K562 (cell line): ENCODE measurements at regions of chr5 and their contacts with region 1.

Region 1: GRCh38 chr5:32709781-32710549 is 1.2 kb upstream of the NPR3 start:
- DNase-seq: peak; percentile 47 to 72 (median 60)
- ATAC-seq: peak; percentile 90
- H3K4me3 ChIP-seq: peak overlapping the region; percentile 27
- H3K27ac ChIP-seq: no peak overlapping the region
- H3K4me1 ChIP-seq: peaks cover 0 to 27% of the 10 kb centered on the region in 2 experiments; a peak in 2 of 5 replicates
- H3K27me3 ChIP-seq: peaks cover 17 to 47% of the 10 kb centered on the region in 2 experiments
- CTCF ChIP-seq: peak; percentile 59 to 72 (median 66)
- EP300 ChIP-seq: no peak
- POLR2A ChIP-seq: no peak
- RAD21 ChIP-seq: peak in 1 of 2 experiments; percentile 33; a peak in 1 of 4 replicates

Region 2: GRCh38 chr5:32726086-32726557 is 16.2 kb after region 1 on chr5:
- CTCF ChIA-PET with region 1: no interaction called
- POLR2A ChIA-PET with region 1: no interaction called
- in situ Hi-C with region 1: no loop called
- intact Hi-C with region 1: no loop called
- DNase-seq: no peak
- ATAC-seq: no peak
- H3K4me3 ChIP-seq: no peak overlapping the region
- H3K27ac ChIP-seq: no peak overlapping the region
- H3K4me1 ChIP-seq: no peaks in the 10 kb centered on the region
- H3K27me3 ChIP-seq: no peaks in the 10 kb centered on the region; a peak in 1 of 5 replicates
- CTCF ChIP-seq: no peak
- EP300 ChIP-seq: no peak
- POLR2A ChIP-seq: no peak
- RAD21 ChIP-seq: no peak

Region 3: DNA sequence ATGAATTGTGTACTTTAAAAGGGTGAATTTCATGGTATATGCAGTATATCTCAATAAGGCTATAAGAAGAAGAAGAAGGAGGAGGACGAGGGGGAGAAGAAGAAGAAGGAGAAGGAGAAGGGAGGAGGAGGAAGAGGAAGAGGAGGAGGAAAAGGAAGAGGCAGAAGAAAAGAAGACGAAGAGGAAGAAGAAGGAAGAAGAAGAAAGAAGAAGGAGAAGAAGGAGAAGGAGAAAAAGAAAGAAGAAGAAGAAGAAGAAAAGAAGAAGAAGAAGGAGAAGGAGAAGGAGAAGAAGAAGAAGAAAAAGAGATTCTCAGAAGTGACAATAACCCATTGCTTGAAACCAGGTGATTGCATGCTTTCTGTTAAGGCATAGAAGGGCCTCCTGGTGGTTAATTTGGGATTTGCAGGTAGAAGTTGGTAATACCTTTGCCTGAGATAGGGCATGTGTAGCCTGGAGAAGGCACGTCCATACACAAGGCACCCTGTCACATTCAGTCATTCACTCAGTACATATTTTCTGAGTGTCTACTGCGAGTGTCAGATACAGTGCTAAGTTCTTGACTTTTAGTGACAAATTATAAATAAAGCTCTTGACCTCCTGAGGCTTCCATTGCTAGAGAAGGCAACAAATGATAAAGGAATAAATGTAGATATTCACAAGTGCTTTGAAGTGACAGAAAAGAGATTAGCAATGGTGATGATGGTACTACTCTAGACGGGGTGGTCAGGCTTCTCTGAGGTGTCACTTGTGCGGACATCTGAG is 232.4 kb after region 1 on chr5:
- CTCF ChIA-PET with region 1: no interaction called
- POLR2A ChIA-PET with region 1: no interaction called
- in situ Hi-C with region 1: no loop called
- intact Hi-C with region 1: loop called (anchors 10 kb)
- DNase-seq: peak; percentile 26 to 51 (median 40)
- ATAC-seq: peak; percentile 64; the same call in 2 of the 3 replicates
- H3K4me3 ChIP-seq: no peak overlapping the region
- H3K27ac ChIP-seq: no peak overlapping the region
- H3K4me1 ChIP-seq: no peaks in the 10 kb centered on the region
- H3K27me3 ChIP-seq: no peaks in the 10 kb centered on the region
- CTCF ChIP-seq: peak; percentile 29 to 51 (median 50); a peak in 4 of 6 replicates
- EP300 ChIP-seq: no peak
- POLR2A ChIP-seq: no peak
- RAD21 ChIP-seq: peak in 1 of 2 experiments; percentile 59; a peak in 3 of 4 replicates

Region 4: DNA sequence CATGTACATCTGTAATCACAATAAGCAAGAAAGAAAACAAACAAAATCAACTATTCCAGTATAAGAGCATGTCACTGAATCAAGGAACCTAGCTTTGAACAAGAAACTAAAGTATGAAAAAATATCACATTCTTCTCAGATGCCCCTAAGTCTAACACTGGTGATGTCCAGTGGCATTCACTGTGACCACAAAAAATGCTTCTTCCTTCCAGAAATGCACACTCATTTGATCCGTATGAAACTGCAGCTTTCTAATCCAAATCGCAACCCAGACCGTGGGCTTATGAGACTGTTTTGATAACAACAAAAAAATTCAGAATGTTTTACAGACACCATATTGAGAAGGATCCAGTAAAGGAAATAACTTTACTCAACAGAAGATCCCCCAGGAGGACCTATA is 410.7 kb after region 1 on chr5:
- CTCF ChIA-PET with region 1: no interaction called
- POLR2A ChIA-PET with region 1: no interaction called
- in situ Hi-C with region 1: no loop called
- intact Hi-C with region 1: no loop called
- DNase-seq: no peak
- ATAC-seq: no peak
- H3K4me3 ChIP-seq: no peak overlapping the region
- H3K27ac ChIP-seq: no peak overlapping the region
- H3K4me1 ChIP-seq: no peaks in the 10 kb centered on the region
- H3K27me3 ChIP-seq: no peaks in the 10 kb centered on the region
- CTCF ChIP-seq: no peak
- EP300 ChIP-seq: no peak
- POLR2A ChIP-seq: no peak
- RAD21 ChIP-seq: no peak

Region 5: DNA sequence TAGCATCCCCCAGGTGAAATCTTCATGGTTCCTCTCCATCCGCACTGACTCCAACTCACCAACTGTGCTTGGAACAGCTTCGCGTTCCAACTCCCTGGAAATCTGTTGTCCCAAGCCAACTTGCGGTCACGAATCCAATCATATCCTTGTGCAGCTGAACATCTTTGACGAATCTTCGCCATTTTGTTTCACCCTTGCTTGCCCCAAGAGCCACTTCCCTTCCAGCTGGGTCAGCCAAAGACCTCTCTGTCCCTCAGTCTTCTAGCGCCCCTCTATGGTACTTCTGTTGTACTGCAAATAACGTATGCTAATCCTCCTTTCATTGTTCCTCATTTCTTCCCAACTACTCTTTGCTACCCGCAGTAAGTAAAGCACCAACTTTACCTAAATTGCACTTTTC is 669.8 kb after region 1 on chr5:
- CTCF ChIA-PET with region 1: no interaction called
- POLR2A ChIA-PET with region 1: no interaction called
- in situ Hi-C with region 1: no loop called
- intact Hi-C with region 1: loop called (anchors 1 kb)
- DNase-seq: peak in 3 of 4 experiments; percentile 14 to 28 (median 17)
- ATAC-seq: peak; percentile 83
- H3K4me3 ChIP-seq: no peak overlapping the region
- H3K27ac ChIP-seq: no peak overlapping the region
- H3K4me1 ChIP-seq: no peaks in the 10 kb centered on the region
- H3K27me3 ChIP-seq: no peaks in the 10 kb centered on the region
- CTCF ChIP-seq: peak; percentile 55 to 68 (median 60)
- EP300 ChIP-seq: no peak
- POLR2A ChIP-seq: no peak
- RAD21 ChIP-seq: peak in 1 of 2 experiments; percentile 68; a peak in 3 of 4 replicates

Region 6: DNA sequence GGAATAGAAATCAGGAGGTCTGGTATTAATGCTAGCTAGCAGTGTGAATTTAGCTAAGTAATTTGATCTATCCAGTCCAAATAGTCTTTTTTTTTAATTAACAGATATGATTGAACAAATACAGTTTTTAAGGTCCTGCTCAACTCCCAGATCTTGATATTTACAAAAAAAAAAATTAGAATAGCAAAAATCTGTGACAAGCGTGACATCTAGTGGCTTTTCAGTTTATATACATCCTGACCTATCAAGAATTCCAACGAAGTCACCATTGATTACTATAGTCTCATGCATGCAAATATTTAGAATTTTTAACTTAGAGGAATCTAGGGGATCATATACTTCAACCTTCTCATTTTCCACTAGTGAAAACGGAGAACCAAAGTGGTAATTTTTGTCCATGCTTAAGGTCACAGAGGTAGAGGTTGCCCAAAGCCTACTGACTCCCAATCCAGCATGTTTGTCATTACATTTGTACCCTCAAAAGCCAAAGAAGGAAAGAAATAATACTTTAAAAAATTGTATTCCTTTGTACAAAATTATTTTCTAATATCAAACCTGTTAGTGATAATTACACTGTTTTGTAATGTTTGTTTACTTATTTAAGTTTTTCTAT is 713.2 kb after region 1 on chr5:
- CTCF ChIA-PET with region 1: interaction called, 3 read pairs
- POLR2A ChIA-PET with region 1: no interaction called
- in situ Hi-C with region 1: no loop called
- intact Hi-C with region 1: loop called (anchors 5 kb)
- DNase-seq: peak in 2 of 4 experiments; percentile 21 to 32
- ATAC-seq: peak; percentile 76
- H3K4me3 ChIP-seq: no peak overlapping the region
- H3K27ac ChIP-seq: no peak overlapping the region
- H3K4me1 ChIP-seq: no peaks in the 10 kb centered on the region
- H3K27me3 ChIP-seq: peaks cover 0 to 3% of the 10 kb centered on the region in 2 experiments; a peak in 2 of 5 replicates
- CTCF ChIP-seq: peak in 2 of 3 experiments; percentile 22 to 62; a peak in 2 of 6 replicates
- EP300 ChIP-seq: no peak
- POLR2A ChIP-seq: no peak
- RAD21 ChIP-seq: peak; percentile 49 to 70